ENCODE measurements at regions of chr9 and their contacts with region 1.

Region 1: DNA sequence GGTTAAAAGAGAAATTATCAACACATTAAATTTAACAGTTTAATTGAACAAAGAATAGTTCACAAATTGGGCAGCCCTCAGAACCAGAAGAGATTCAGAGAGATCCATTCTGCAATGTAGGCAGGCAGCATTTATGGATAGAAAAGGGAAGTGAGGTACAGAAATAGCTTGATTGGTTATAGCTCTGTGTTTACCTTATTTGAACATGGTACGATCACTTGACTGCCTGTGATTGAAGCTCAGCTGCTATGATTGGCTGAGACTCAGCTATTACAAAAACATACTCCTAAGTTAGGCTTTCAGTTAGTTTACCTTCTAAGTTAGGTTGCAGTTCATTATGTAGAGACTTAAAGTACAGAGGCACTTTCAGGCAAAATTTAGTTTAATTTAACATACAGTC is 7.3 kb downstream of the CNTRL start:
- DNase-seq: no peak
- ATAC-seq: peak; percentile 54
- H3K4me3 ChIP-seq: no peak overlapping the region
- H3K27ac ChIP-seq: no peak overlapping the region; the same call in 1 of the 2 replicates
- H3K4me1 ChIP-seq: no peaks in the 10 kb centered on the region
- H3K27me3 ChIP-seq: no peaks in the 10 kb centered on the region
- CTCF ChIP-seq: no peak
- EP300 ChIP-seq: no peak
- POLR2A ChIP-seq: no peak
- RAD21 ChIP-seq: no peak

Region 2: DNA sequence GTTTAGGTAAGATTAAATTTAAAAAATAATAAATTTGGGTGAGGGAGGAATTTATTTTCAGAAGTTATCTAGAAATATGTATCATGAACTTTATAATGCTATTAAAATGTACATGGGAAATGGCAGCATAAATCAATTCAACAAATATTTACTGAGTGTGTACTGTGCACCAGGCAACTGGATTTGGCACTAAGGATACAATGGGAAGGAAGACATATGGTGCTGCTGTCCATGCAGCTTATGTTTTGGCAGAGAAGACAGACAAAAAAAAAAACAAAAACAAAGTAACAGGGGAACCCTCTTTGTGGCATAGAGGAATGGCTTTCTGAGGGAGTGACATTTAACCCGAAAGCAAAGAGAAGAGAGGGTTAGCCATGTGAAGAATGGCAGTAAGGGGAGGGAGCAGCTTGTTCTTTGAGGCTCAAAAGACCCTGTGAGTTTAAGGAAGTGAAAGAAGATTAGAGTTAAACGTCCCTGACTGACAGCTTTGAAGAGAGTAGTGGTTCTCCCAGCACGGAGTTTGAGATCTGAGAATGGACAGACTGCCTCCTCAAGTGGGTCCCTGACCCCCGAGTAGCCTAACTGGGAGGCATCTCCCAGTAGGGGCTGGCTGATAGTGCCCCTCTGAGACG is 16.6 kb after region 1 on chr9:
- CTCF ChIA-PET with region 1: interaction called, 3 read pairs
- POLR2A ChIA-PET with region 1: no interaction called
- RAD21 ChIA-PET with region 1: no interaction called
- SMC1A ChIA-PET with region 1: interaction called, 22 read pairs
- in situ Hi-C with region 1: no loop called
- intact Hi-C with region 1: no loop called
- DNase-seq: no peak
- ATAC-seq: no peak
- H3K4me3 ChIP-seq: no peak overlapping the region
- H3K27ac ChIP-seq: no peak overlapping the region
- H3K4me1 ChIP-seq: no peaks in the 10 kb centered on the region
- H3K27me3 ChIP-seq: no peaks in the 10 kb centered on the region
- CTCF ChIP-seq: no peak
- EP300 ChIP-seq: no peak
- POLR2A ChIP-seq: no peak
- RAD21 ChIP-seq: no peak

Measured in GM12878 (cell line).